Common myeloid progenitor, CD34-positive (primary cell): ENCODE measurements at regions of chr18 and their contacts with region 1.

Region 1: DNA sequence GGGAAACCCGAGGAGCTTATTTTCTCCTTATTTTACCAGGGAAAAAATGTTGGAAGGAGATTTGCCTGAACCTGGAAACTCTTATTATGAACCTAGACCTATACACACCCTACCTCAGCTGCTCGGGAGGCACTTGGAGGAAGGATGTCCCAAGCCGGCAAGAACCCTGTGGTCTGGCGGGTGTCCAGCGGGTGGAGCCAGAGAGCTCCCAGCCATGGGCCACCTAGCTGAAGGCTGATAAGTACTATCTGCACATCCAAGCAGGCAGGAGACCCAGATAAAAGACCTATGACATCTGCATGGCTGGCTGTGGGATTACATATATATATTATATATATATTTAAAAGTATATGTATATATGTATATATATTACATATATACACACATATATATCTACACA is 1.1 kb upstream of the SLC14A1 start:
- DNase-seq: peak; percentile 86 to 91 (median 89)
- H3K4me3 ChIP-seq: no peak overlapping the region
- H3K27ac ChIP-seq: no peak overlapping the region
- H3K4me1 ChIP-seq: peaks cover 0 to 3% (median under 1%) of the 10 kb centered on the region in 4 experiments
- H3K27me3 ChIP-seq: no peaks in the 10 kb centered on the region

Region 2: GRCh38 chr18:45353530-45353929 is 369.4 kb before region 1 on chr18:
- CTCF ChIA-PET with region 1: no interaction called
- POLR2A ChIA-PET with region 1: no interaction called
- DNase-seq: no peak
- H3K4me3 ChIP-seq: no peak overlapping the region
- H3K27ac ChIP-seq: no peak overlapping the region
- H3K4me1 ChIP-seq: peaks cover 0 to 13% (median 5%) of the 10 kb centered on the region in 4 experiments
- H3K27me3 ChIP-seq: no peaks in the 10 kb centered on the region

Region 3: DNA sequence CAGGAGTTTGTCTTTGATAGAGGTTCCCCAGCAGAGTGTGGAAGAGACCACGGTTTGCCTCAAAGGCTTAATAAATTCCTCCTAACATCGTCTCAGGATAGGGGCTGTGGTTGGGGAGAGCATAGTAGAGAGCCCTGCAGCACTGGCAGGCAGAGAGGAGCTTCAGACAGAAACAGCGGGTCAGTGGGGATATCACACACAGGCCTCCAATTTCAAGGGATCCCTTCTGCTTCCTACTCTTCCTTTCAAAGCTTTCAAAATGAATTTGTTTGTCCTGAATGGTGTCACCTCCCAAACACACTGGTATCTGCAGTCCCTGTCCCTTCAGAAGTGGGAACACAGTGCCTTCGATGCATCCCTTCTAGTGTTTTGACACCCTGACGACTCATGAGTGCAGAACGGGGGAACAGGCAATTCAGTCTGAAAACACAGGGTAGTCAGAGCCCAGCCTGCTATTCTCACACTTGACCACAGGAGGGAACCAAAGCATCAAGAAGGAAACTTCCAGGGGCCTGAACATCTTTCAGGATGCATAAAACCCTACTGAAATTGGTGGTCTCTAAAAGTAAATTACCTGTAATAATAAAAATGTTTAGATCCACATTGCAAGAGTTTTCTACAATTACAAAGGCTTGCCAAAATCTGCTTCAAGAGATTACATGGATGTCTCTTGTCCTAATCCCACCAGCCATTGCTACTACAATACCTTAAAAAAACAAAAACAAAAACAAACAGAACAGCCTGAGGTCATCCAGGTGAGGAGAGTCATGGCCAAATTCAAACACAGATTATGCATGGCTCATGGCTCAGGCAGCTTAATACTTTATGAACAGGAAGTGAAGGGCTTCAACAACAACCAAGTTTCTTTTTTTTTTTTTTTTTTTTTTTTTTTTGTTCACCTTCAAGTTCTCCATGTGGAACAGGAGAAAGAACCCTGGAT is 57.8 kb before region 1 on chr18:
- CTCF ChIA-PET with region 1: interaction called, 32 read pairs
- POLR2A ChIA-PET with region 1: no interaction called
- DNase-seq: peak; percentile 69 to 84 (median 77)
- H3K4me3 ChIP-seq: no peak overlapping the region
- H3K27ac ChIP-seq: no peak overlapping the region
- H3K4me1 ChIP-seq: peaks cover 24 to 48% (median 37%) of the 10 kb centered on the region in 4 experiments
- H3K27me3 ChIP-seq: no peaks in the 10 kb centered on the region

Region 4: GRCh38 chr18:45690975-45691815 is 31.7 kb before region 1 on chr18:
- CTCF ChIA-PET with region 1: interaction called, 12 read pairs
- POLR2A ChIA-PET with region 1: no interaction called
- DNase-seq: peak; percentile 76 to 87 (median 81)
- H3K4me3 ChIP-seq: no peak overlapping the region
- H3K27ac ChIP-seq: no peak overlapping the region
- H3K4me1 ChIP-seq: peaks cover 20 to 37% (median 29%) of the 10 kb centered on the region in 4 experiments
- H3K27me3 ChIP-seq: no peaks in the 10 kb centered on the region

Region 5: GRCh38 chr18:45775241-45775676 is 52.4 kb after region 1 on chr18:
- CTCF ChIA-PET with region 1: interaction called, 18 read pairs
- POLR2A ChIA-PET with region 1: no interaction called
- DNase-seq: peak; percentile 87 to 89 (median 88)
- H3K4me3 ChIP-seq: peak overlapping the region; percentile 15 to 90 (median 73)
- H3K27ac ChIP-seq: peak overlapping the region; percentile 59 to 78
- H3K4me1 ChIP-seq: peaks cover 4 to 22% (median 16%) of the 10 kb centered on the region in 4 experiments
- H3K27me3 ChIP-seq: no peaks in the 10 kb centered on the region

Region 6: DNA sequence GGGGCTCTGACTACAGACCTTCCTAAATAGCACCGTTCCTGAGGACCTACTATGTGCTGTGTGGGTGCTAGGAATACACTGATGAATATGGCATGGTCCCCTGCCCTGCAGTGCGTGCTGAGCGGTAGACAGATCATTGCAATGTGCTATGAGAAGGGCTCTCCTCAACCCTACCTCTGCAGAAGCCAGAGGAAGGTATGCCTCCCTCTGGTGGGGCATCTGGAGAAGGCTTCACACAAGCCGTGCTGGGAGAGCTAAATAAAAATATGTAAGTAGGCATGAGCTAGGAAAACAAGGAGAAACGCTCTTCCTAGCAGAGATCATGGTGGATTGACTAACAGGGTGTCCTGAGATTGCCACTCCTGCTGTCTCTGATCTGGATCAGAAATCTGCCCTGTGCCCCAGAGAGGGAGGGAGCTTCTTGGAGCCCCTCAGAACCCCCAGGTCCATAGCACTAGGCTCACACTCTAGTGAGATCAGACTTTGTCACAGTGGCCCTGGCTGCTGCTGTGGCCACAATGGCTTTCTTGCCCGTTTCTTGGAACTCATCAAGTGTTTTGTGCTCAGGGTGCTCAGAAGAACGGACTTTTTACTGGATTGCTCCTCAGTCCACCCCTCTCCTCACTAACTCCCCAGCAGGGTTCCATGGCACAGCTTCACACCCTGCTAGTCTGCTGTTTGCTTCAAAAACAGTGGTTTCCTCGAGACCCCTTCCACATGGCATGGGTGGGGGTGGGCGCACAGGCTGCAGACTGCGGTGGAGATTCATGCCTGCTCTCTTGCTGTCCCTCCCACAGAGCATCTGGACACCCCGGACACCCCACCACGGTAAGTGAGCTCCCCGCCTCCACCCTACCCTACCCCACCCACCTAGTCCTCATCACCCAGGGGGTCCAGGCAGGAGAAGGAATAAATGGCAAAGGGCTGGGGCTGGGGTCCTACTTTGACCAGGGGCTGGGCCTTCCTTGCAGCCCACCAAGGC is 116.8 kb after region 1 on chr18:
- CTCF ChIA-PET with region 1: interaction called, 151 read pairs
- POLR2A ChIA-PET with region 1: interaction called, 3 read pairs
- DNase-seq: peak; percentile 81 to 90 (median 88)
- H3K4me3 ChIP-seq: no peak overlapping the region
- H3K27ac ChIP-seq: no peak overlapping the region
- H3K4me1 ChIP-seq: peaks cover 7 to 47% (median 42%) of the 10 kb centered on the region in 4 experiments
- H3K27me3 ChIP-seq: peaks cover 0 to 13% (median 2%) of the 10 kb centered on the region in 5 experiments

Region 7: DNA sequence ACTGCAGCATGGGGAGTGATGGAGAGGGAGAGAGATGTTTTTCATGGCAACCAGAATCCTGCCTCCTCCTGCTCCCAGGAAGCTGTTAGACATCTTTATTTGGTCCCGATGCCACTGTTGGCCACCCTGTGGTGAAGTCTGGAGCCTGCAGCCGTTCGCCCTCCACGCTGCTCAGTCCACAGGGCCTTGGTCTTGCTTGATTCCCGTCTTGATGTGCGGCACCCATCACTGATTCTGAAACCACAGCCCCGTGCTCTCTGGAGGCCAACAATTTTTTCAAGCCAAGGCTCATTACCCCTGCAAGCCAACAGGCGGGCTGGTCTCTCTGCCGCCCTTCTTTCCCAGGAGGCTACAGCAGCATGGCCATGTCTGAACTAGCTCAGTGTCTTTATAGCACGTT is 127.1 kb after region 1 on chr18:
- CTCF ChIA-PET with region 1: interaction called, 10 read pairs
- POLR2A ChIA-PET with region 1: no interaction called
- DNase-seq: no peak
- H3K4me3 ChIP-seq: no peak overlapping the region
- H3K27ac ChIP-seq: no peak overlapping the region
- H3K4me1 ChIP-seq: peaks cover 0 to 4% (median 0%) of the 10 kb centered on the region in 4 experiments
- H3K27me3 ChIP-seq: no peaks in the 10 kb centered on the region